ENCODE measurements at regions of chr6 and their contacts with region 1.

Region 1: GRCh38 chr6:107114906-107115580 is at the start of gene BEND3:
- DNase-seq: peak; percentile 42 to 44
- H3K4me3 ChIP-seq: peak within 1 kb of the TSS; percentile 9 to 53 (median 53)
- H3K27ac ChIP-seq: peak within 1 kb of the TSS in 2 of 3 donors; percentile 38 to 78
- H3K4me1 ChIP-seq: peaks cover 6% of the 10 kb centered on the region in 2 donors
- H3K27me3 ChIP-seq: no peaks in the 10 kb centered on the region
- CTCF ChIP-seq: no peak
- POLR2A ChIP-seq: no peak
- total RNA-seq, gene BEND3: 2.5 to 5.9 (median 2.7) TPM

Region 2: GRCh38 chr6:107026965-107027364 is 88.1 kb before region 1 on chr6:
- intact Hi-C with region 1: loop called (anchors 5 kb)
- DNase-seq: no peak
- H3K4me3 ChIP-seq: no peak overlapping the region
- H3K27ac ChIP-seq: no peak overlapping the region
- H3K4me1 ChIP-seq: peaks cover 0 to 18% of the 10 kb centered on the region in 2 donors
- H3K27me3 ChIP-seq: no peaks in the 10 kb centered on the region
- CTCF ChIP-seq: no peak
- POLR2A ChIP-seq: no peak

Region 3: DNA sequence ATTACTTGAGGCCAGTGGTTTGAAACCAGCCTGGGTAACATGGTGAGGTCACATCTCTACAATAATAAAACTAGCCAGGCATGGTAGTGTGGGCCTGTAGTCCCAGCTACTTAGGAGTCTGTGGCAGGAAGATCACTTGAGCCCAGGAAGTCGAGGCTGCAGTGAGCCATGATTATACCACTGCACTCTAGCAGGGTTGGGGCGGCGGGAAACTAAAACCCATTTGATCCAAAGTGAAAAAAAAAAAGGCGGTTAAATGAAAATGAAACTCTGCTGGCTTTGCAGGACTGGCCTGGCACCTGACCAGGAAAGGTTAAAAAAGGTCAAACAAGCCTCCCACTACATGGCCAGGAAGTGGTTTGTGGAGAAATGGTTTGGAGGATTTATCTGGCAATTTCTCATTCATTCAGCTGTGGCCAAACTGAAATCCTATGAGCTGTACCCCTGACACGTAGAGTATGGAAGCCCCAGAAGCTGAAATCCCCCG is 50.4 kb before region 1 on chr6:
- intact Hi-C with region 1: no loop called
- DNase-seq: peak; percentile 54 to 56
- H3K4me3 ChIP-seq: no peak overlapping the region
- H3K27ac ChIP-seq: no peak overlapping the region
- H3K4me1 ChIP-seq: peaks cover 0 to 7% of the 10 kb centered on the region in 2 donors
- H3K27me3 ChIP-seq: no peaks in the 10 kb centered on the region
- CTCF ChIP-seq: no peak
- POLR2A ChIP-seq: no peak

Region 4: GRCh38 chr6:107237992-107238660 is 123.1 kb after region 1 on chr6:
- intact Hi-C with region 1: no loop called
- DNase-seq: no peak
- H3K4me3 ChIP-seq: no peak overlapping the region
- H3K27ac ChIP-seq: peak overlapping the region in 1 of 3 donors; percentile 3
- H3K4me1 ChIP-seq: peaks cover 22 to 26% of the 10 kb centered on the region in 2 donors
- H3K27me3 ChIP-seq: no peaks in the 10 kb centered on the region
- CTCF ChIP-seq: no peak
- POLR2A ChIP-seq: no peak